ENCODE measurements at regions of chr11 and their contacts with region 1.

Region 1: GRCh38 chr11:103091801-103092524 is at the start of gene DCUN1D5:
- DNase-seq: peak; percentile 94
- ATAC-seq: peak; percentile 97
- H3K4me3 ChIP-seq: peak within 1 kb of the TSS; percentile 64
- H3K27ac ChIP-seq: peak within 1 kb of the TSS; percentile 76
- H3K4me1 ChIP-seq: no peaks in the 10 kb centered on the region
- H3K27me3 ChIP-seq: peaks cover 3% of the 10 kb centered on the region
- CTCF ChIP-seq: no peak
- POLR2A ChIP-seq: peak; percentile 92
- RAD21 ChIP-seq: no peak
- total RNA-seq, gene DCUN1D5: 58.3 and 69.4 TPM in 2 replicates

Region 2: GRCh38 chr11:103108933-103109817 is 17.2 kb after region 1 on chr11 and contains the start of gene DYNC2H1:
- CTCF ChIA-PET with region 1: interaction called, 10 read pairs
- POLR2A ChIA-PET with region 1: interaction called, 3 read pairs
- dilution Hi-C with region 1: no loop called
- in situ Hi-C with region 1: no loop called
- intact Hi-C with region 1: no loop called
- DNase-seq: peak; percentile 91
- ATAC-seq: peak; percentile 94
- H3K4me3 ChIP-seq: peak within 1 kb of the TSS; percentile 71
- H3K27ac ChIP-seq: peak within 1 kb of the TSS; percentile 79
- H3K4me1 ChIP-seq: no peaks in the 10 kb centered on the region
- H3K27me3 ChIP-seq: peaks cover 4% of the 10 kb centered on the region; the same call in 1 of the 2 replicates
- CTCF ChIP-seq: peak; percentile 59
- POLR2A ChIP-seq: no peak
- RAD21 ChIP-seq: peak; percentile 22; the same call in 1 of the 2 replicates
- total RNA-seq, gene DYNC2H1: 21.0 and 25.3 TPM in 2 replicates

Region 3: DNA sequence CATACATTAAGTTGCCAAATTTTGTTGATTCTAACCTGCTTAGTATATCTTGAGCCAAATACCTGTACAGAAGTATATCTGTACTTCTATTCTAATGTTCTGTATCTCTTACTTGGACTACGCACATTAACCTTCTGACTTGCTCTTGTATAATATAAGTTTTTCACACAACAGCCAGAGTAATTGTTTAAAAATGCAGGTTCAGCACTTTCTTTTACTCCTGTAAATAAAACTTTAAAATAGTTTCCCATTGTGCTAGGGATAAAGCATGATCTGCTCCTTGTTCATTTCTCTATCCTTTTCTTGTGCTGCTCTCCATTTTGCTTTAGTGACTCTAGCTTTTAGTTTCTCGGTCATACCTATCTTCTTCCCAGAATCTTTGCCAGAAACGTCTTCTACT is 65.6 kb after region 1 on chr11:
- CTCF ChIA-PET with region 1: no interaction called
- POLR2A ChIA-PET with region 1: no interaction called
- dilution Hi-C with region 1: no loop called
- in situ Hi-C with region 1: no loop called
- intact Hi-C with region 1: no loop called
- DNase-seq: no peak
- ATAC-seq: no peak
- H3K4me3 ChIP-seq: no peak overlapping the region
- H3K27ac ChIP-seq: no peak overlapping the region
- H3K4me1 ChIP-seq: no peaks in the 10 kb centered on the region
- H3K27me3 ChIP-seq: no peaks in the 10 kb centered on the region
- CTCF ChIP-seq: no peak
- POLR2A ChIP-seq: no peak
- RAD21 ChIP-seq: no peak

Measured in IMR-90 (cell line).